ENCODE measurements at regions of chr16 and their contacts with region 1.

Region 1: GRCh38 chr16:65704866-65705265 is 583.0 kb upstream of the CDH11 start:
- DNase-seq: no peak
- H3K4me3 ChIP-seq: no peak overlapping the region
- H3K27ac ChIP-seq: no peak overlapping the region
- H3K4me1 ChIP-seq: no peaks in the 10 kb centered on the region
- CTCF ChIP-seq: peak; percentile 68

Region 2: GRCh38 chr16:65453646-65454045 is 251.2 kb before region 1 on chr16:
- CTCF ChIA-PET with region 1: no interaction called
- POLR2A ChIA-PET with region 1: no interaction called
- intact Hi-C with region 1: no loop called
- DNase-seq: no peak
- H3K4me3 ChIP-seq: no peak overlapping the region
- H3K27ac ChIP-seq: no peak overlapping the region
- H3K4me1 ChIP-seq: no peaks in the 10 kb centered on the region
- CTCF ChIP-seq: no peak

Region 3: GRCh38 chr16:65793781-65794180 is 88.9 kb after region 1 on chr16:
- CTCF ChIA-PET with region 1: no interaction called
- POLR2A ChIA-PET with region 1: no interaction called
- intact Hi-C with region 1: loop called (anchors 5 kb)
- DNase-seq: no peak
- H3K4me3 ChIP-seq: no peak overlapping the region
- H3K27ac ChIP-seq: no peak overlapping the region
- H3K4me1 ChIP-seq: peaks cover 6% of the 10 kb centered on the region
- CTCF ChIP-seq: no peak

Measured in OCI-LY7 (cell line).